Dendritic cell treated with granulocyte-macrophage colony-stimulating factor and Interleukin-4, amounts not matched to agents 40 ng/mL and 50 ng/mL, for 4 days (primary cell): ENCODE measurements at regions of chr11 and their contacts with region 1.

Region 1: DNA sequence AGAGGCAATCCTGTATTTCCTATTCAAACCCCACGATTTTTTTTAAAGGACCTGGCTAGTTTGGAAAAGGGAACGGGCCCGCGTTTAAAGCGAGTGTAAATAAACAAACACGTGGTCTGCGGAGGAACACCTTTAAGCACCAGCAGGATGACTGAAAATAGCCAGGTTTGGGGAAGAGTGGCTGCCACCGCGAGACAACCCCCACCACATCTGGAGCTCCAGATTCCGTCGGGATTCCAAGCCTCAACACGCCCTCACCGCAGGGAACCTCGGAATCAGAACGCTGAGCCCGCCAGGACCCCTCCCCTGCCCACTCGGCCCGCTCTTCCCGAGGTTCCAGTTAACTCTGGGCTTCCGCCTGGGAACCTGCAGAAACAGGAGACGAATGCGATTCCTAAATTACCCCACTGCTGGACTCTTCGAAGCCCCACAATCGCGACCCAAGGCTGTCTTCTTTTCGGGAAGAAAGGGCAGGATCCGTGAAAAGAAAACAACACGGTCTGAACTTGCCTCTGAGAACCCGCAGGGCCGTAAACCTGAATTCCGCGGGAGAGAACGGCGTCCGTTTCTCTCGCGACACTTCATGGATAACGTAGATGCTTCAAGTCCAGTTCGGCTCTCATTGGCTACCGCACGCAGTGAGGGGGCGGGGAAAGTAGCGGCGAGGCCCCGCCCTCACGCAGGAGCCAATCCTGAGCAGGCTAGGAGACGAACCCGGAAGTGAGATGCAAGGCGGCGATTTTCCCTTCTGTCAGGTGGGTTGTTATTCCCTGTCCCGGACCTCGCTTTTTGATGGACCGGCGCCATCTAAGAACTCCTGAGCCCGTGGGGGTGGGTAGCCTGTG is at the starts of genes ANKRD49 and MRE11:
- H3K4me3 Mint-ChIP-seq: peak within 1 kb of the TSS; percentile 90
- H3K27ac Mint-ChIP-seq: peak within 1 kb of the TSS; percentile 94
- H3K4me1 Mint-ChIP-seq: peaks cover 25% of the 10 kb centered on the region
- H3K27me3 Mint-ChIP-seq: no peaks in the 10 kb centered on the region

Region 2: GRCh38 chr11:93741094-93741881 is 752.2 kb before region 1 on chr11 and contains the starts of genes C11orf54 and TAF1D:
- intact Hi-C with region 1: loop called (anchors 5 kb)
- H3K4me3 Mint-ChIP-seq: peak within 1 kb of the TSS; percentile 99
- H3K27ac Mint-ChIP-seq: peak within 1 kb of the TSS; percentile 100
- H3K4me1 Mint-ChIP-seq: peaks cover 53% of the 10 kb centered on the region
- H3K27me3 Mint-ChIP-seq: no peaks in the 10 kb centered on the region

Region 3: DNA sequence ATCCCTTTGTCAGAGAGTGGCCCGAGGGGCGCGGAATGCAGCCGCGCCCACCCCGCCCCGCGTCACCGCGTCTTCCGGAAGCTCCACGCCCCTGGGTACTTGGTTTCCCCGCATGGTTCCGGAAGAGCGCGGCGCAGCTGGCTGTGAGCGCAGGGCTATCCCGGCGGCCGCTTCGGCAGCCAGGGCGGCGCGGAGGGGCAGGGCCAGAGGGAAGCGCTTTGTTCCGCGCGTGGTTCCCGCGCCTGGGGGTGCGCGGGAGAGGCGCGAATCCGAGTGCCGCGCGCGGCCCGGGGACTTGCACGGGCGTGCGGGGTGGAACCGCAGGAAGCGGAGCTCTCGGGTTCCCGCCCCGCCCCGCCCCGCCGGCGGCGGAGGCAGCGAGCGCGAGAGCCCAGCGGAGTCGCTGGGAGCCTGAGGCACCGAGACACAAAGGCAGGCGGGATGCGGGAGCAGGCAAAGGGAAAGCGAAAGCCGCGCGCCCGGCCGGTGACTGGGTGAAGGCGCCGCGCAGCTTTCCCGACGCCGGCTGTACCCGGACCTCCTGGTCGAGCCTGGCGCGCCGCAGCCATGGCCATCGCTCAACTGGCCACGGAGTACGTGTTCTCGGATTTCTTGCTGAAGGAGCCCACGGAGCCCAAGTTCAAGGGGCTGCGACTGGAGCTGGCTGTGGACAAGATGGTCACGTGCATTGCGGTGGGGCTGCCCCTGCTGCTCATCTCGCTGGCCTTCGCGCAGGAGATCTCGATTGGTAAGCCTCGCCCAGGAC is 364.6 kb before region 1 on chr11 and contains the start of gene PANX1:
- intact Hi-C with region 1: loop called (anchors 5 kb)
- H3K4me3 Mint-ChIP-seq: no peak within 1 kb of the TSS
- H3K27ac Mint-ChIP-seq: no peak within 1 kb of the TSS
- H3K4me1 Mint-ChIP-seq: peaks cover 26% of the 10 kb centered on the region
- H3K27me3 Mint-ChIP-seq: peaks cover 2% of the 10 kb centered on the region

Region 4: DNA sequence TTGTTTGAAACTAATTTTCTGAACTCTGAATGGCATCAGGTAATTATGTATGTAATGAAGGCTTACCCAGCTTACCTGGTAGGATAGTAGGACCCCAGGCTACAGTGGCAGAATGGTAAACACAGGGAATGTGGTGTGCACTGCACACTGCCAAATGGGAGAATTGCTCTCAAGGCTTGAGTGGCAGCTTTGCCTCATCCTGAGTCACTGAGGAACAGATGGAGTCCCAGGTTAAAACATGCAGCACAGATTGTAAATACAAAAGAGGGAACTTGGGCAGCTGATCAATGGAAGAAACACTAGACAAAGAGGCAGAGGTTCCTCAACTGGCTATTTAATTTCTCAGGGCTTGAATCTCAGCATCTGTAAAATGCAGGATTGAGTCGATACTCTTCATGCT is 116.7 kb before region 1 on chr11:
- intact Hi-C with region 1: no loop called
- H3K4me3 Mint-ChIP-seq: no peak overlapping the region
- H3K27ac Mint-ChIP-seq: no peak overlapping the region
- H3K4me1 Mint-ChIP-seq: no peaks in the 10 kb centered on the region
- H3K27me3 Mint-ChIP-seq: peaks cover 2% of the 10 kb centered on the region

Region 5: DNA sequence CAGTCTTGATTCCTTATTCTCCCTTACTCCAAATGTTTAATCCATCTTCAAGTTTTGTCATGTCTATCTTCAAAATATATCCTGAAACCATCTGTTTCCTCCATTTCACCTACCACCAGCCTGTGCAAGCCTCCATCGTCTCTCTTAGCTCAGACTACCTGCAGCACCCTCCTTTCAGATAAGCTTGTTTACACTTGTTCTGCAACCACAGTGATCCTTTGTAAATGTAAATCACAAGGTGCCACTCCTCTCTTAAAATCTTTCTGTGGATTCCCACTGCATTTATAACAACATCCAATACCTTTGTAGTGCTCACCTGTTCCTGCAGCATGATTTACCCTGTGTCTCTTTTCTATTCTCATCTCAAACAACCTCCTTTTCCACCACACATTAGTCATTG is 60.5 kb before region 1 on chr11:
- intact Hi-C with region 1: no loop called
- H3K4me3 Mint-ChIP-seq: no peak overlapping the region
- H3K27ac Mint-ChIP-seq: no peak overlapping the region
- H3K4me1 Mint-ChIP-seq: no peaks in the 10 kb centered on the region
- H3K27me3 Mint-ChIP-seq: no peaks in the 10 kb centered on the region

Region 6: DNA sequence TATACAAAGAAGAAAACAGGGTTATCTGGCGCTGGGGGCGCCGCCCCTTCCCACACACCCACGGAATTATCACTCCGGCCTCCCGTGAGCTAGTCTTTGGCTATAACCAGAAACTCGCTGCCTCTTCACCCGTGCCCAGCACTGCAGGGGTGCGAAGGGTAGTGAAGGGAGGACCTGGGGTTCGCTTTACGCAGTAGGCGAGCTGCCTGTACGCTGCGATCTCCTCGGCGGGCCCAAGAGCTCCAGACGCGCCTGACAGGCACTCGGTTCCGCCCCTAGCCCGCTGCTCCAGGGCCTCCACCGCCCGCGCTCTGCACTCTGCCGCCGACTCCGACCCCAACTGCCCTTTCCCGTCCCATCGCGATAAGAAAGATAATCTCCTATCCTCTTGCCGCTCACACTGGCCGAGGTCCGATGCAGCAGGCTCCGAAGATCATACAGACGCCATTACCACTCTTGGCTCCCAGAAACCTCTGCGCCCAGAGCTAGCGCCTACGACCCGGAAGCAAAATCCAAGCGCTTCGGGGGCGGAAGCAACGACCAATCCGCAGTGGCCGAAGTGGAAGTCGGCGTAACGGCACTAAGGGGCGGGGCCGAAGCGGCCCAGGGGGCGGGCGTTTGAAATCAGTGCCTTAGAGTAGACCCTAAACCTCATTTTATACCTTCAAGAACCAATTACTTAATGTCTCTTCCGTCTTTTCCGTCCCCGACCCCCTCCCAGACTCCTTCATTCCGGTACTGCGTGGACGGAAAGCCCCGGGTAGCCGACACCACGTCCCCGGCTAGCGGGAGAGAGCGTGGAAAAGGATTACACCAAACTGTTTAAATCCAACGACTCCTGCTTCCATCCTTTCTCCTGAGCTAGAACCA is 479.8 kb after region 1 on chr11 and contains the starts of genes CWC15 and KDM4D:
- intact Hi-C with region 1: loop called (anchors 10 kb)
- H3K4me3 Mint-ChIP-seq: peak within 1 kb of the TSS; percentile 97
- H3K27ac Mint-ChIP-seq: peak within 1 kb of the TSS; percentile 97
- H3K4me1 Mint-ChIP-seq: peaks cover 12% of the 10 kb centered on the region
- H3K27me3 Mint-ChIP-seq: peaks cover 7% of the 10 kb centered on the region

Region 7: GRCh38 chr11:95697614-95698408 is 1204.3 kb after region 1 on chr11:
- intact Hi-C with region 1: no loop called
- H3K4me3 Mint-ChIP-seq: peak overlapping the region; percentile 14
- H3K27ac Mint-ChIP-seq: no peak overlapping the region
- H3K4me1 Mint-ChIP-seq: peaks cover 25% of the 10 kb centered on the region
- H3K27me3 Mint-ChIP-seq: no peaks in the 10 kb centered on the region